Psoas muscle (tissue), 8 donors: ENCODE measurements at regions of chr14 and their contacts with region 1.

Region 1: DNA sequence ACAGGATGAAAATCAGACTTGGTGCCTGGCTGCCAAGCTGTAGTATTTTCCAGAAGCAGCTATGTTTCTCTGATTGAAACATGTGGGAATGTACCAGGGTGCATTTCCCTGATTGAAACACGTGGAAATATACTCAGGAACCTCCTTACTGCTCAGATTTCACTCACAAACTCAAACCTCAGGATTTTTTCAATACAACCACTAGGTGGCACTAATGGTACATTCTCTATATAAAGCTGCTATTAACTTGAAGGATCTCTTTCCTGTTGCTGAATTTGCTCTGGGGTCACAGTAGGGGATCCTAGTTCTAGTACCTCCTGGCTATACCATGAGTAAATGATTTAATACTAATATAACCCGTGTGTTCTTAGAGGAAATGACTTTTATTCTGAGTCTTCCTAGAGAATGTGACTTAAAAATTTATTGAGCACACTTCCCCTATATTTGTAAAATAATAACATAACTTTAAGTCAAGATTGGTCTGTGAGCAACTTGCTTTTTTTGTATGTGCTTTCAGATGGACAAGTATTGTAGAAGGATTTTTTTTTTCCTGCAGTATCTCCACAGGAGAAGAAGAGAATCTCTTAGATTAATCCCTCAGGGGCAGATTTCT is 173.8 kb upstream of the MIS18BP1 start:
- DNase-seq: no peak
- ATAC-seq: peak; percentile 63 to 72 (median 65)
- H3K4me3 ChIP-seq: no peak overlapping the region
- H3K27ac ChIP-seq: no peak overlapping the region
- H3K4me1 ChIP-seq: no peaks in the 10 kb centered on the region
- H3K27me3 ChIP-seq: no peaks in the 10 kb centered on the region
- CTCF ChIP-seq: peak; percentile 66

Region 2: GRCh38 chr14:45526715-45527549 is 100.2 kb after region 1 on chr14:
- intact Hi-C with region 1: loop called (anchors 2 to 5 kb)
- DNase-seq: peak in 1 of 2 donors; percentile 35
- ATAC-seq: peak; percentile 81 to 94 (median 87)
- H3K4me3 ChIP-seq: no peak overlapping the region
- H3K27ac ChIP-seq: no peak overlapping the region
- H3K4me1 ChIP-seq: no peaks in the 10 kb centered on the region
- H3K27me3 ChIP-seq: no peaks in the 10 kb centered on the region
- CTCF ChIP-seq: peak; percentile 38